AG04450 (cell line): ENCODE measurements at regions of chr3 and their contacts with region 1.

Region 1: DNA sequence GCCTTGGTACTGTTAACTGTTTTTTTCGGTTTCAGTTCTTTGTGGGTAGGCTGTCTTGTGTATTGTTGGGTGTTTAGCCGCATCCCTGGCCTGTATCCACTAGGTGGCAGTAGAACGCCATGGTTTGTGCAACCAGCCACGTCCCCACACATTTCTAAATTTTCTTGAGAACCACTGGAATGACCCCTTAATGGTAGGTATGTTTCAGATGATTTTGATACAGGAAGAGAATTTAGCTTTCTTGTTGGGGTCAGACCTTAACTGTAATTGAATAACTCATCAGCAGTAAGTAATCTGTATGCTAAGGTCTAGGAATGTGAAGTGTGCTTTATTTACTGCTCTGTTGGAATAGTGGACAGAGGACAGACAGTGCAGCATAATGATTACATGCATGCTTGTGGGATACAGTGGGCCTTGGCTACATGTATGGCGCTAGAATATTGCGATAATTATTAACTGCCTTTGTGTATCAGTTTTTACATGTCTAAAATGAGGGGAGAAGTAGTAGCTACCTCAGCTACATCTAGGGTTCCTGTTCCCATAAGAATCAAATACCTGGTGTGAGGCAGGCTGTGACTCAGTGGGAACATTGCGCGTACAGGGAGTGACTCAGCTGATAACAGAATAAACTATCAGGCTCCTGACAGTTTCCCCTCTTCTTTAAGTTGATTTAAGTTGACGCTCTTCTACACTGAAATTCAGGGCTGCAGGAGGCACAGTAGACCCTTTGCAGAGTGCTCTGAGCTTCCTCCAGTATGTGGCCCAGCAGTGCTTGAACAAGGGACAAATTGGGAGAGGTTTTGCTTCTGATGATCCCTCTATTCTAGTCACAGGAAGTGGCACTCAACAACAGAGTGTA is 25.0 kb upstream of the GPR171 start:
- DNase-seq: peak; percentile 73
- H3K4me3 ChIP-seq: no peak overlapping the region
- H3K27ac ChIP-seq: peak overlapping the region; percentile 73
- H3K27me3 ChIP-seq: no peaks in the 10 kb centered on the region
- CTCF ChIP-seq: peak; percentile 97

Region 2: DNA sequence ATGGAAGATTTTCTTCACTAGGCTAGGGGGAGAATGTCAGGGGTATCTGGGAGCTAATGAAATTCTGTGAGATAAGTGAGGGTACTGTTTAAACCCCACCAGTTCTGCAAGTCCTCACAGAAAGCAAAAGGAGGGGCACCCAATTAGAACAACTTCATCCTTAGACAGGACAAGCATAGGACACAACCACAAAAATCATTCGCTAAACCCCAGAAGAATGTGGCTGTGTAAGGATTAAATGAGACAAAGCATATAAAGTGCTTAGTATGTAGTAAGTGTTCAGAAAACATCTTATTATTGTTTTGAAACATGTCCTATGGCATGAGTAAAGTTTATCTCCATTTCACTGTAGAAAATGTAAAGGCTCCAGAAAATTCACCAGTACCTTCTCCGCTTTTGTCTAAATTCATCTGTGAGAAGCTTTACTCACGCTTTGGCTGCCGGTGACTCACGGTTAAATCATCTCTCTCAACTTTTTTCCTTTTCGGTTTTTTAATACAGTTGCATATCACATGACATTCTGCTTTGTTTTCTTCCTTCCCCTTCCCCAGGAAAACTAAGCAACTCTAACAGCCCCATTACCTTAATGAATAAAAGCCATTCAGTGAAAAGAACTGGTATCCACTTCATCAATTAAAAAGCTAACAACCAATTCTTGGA is 257.2 kb before region 1 on chr3:
- CTCF ChIA-PET with region 1: no interaction called
- POLR2A ChIA-PET with region 1: no interaction called
- DNase-seq: peak; percentile 15
- H3K4me3 ChIP-seq: no peak overlapping the region
- H3K27ac ChIP-seq: no peak overlapping the region
- H3K27me3 ChIP-seq: no peaks in the 10 kb centered on the region
- CTCF ChIP-seq: no peak

Region 3: GRCh38 chr3:151168269-151169094 is 59.6 kb before region 1 on chr3:
- CTCF ChIA-PET with region 1: interaction called, 40 read pairs
- POLR2A ChIA-PET with region 1: no interaction called
- DNase-seq: peak; percentile 18
- H3K4me3 ChIP-seq: no peak overlapping the region
- H3K27ac ChIP-seq: no peak overlapping the region
- H3K27me3 ChIP-seq: no peaks in the 10 kb centered on the region
- CTCF ChIP-seq: peak; percentile 86

Region 4: DNA sequence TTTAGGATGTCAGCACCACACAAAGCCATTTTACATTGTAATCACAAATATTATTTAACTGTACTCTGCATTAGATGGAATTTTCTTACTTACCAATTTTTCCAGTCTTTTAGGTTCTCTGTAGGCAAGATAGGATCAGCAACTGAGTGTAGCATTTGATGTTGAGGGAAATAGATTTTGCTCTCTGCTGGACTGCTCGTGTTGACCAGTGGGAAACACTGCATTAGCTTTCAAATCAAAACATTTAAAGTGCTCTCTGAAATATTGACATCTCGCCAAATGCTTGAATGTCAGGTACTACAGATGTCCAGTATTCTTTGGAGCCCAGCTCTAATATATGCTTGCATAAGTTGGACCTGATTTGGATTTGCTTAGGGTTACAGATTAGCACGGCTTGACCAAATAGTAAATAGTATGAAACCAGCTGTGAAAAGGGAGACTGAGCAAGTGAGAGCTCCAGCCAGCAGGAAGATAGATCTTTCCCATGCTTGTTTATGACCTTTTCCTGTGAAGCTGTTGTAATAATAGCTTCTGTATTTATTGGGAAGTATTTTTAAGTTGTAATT is 20.8 kb after region 1 on chr3:
- CTCF ChIA-PET with region 1: interaction called, 11 read pairs
- POLR2A ChIA-PET with region 1: no interaction called
- DNase-seq: no peak
- H3K4me3 ChIP-seq: no peak overlapping the region
- H3K27ac ChIP-seq: no peak overlapping the region
- H3K27me3 ChIP-seq: no peaks in the 10 kb centered on the region
- CTCF ChIP-seq: no peak

Region 5: GRCh38 chr3:151265866-151266265 is 37.8 kb after region 1 on chr3:
- CTCF ChIA-PET with region 1: interaction called, 20 read pairs
- POLR2A ChIA-PET with region 1: no interaction called
- DNase-seq: no peak
- H3K4me3 ChIP-seq: no peak overlapping the region
- H3K27ac ChIP-seq: no peak overlapping the region
- H3K27me3 ChIP-seq: no peaks in the 10 kb centered on the region
- CTCF ChIP-seq: no peak

Region 6: DNA sequence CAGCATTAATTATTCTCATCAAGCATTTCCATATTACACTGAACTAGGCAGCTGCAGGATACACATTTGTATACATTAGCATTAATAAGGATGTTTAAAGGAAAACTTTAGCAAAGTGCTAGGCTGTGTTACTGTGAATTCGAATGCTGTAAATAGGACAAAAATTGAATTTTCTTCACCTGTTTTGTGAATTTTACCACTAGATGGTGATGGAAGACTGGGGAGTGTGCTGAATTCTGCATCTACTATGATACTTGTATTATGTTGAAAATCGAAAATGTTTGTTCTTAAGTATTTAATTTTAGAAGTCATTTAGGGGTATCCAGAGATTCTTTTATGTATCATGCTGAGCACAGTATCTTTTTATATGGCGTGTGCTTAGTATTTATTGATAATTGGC is 62.6 kb after region 1 on chr3:
- CTCF ChIA-PET with region 1: interaction called, 44 read pairs
- POLR2A ChIA-PET with region 1: no interaction called
- DNase-seq: no peak
- H3K4me3 ChIP-seq: no peak overlapping the region
- H3K27ac ChIP-seq: no peak overlapping the region
- H3K27me3 ChIP-seq: no peaks in the 10 kb centered on the region
- CTCF ChIP-seq: peak; percentile 64

Region 7: DNA sequence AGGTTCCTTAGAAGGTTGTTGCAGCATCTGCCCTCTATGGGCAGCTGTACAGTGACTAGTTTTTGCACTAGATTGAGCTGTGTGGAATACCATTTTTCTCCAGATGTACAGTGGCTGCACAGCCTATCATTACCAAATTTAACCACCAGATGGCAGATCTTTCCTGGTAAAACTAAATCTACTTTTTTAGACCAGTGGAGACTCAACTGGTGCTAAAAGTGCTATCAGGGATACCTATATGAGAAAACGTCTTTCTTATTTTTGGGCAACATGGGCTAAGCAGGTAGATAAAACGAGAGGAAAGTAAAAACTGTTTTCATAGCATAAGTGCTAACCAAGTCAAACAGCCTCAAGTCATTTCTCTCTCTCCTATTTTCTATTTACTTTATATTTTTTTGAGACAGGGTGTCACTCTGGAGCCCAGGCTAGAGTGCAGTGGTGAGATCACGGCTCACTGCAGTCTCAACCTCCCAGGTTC is 211.7 kb after region 1 on chr3:
- CTCF ChIA-PET with region 1: interaction called, 14 read pairs
- POLR2A ChIA-PET with region 1: no interaction called
- DNase-seq: peak; percentile 48
- H3K4me3 ChIP-seq: no peak overlapping the region
- H3K27ac ChIP-seq: no peak overlapping the region
- H3K27me3 ChIP-seq: no peaks in the 10 kb centered on the region
- CTCF ChIP-seq: peak; percentile 65